ENCODE measurements at regions of chr19 and their contacts with region 1.

Region 1: GRCh38 chr19:6021878-6022569 is 44.1 kb upstream of the RANBP3 start:
- DNase-seq: peak; percentile 92
- ATAC-seq: peak; percentile 97
- H3K4me3 Mint-ChIP-seq: no peak overlapping the region
- H3K27ac Mint-ChIP-seq: no peak overlapping the region
- H3K4me1 Mint-ChIP-seq: peaks cover 2% of the 10 kb centered on the region
- H3K27me3 Mint-ChIP-seq: no peaks in the 10 kb centered on the region
- CTCF ChIP-seq: peak; percentile 74

Region 2: GRCh38 chr19:5904352-5905113 is 117.5 kb before region 1 on chr19 and contains the start of gene VMAC:
- CTCF ChIA-PET with region 1: interaction called, 12 read pairs
- POLR2A ChIA-PET with region 1: no interaction called
- intact Hi-C with region 1: no loop called
- DNase-seq: peak; percentile 100
- ATAC-seq: peak; percentile 83
- H3K4me3 Mint-ChIP-seq: peak within 1 kb of the TSS; percentile 99
- H3K27ac Mint-ChIP-seq: peak within 1 kb of the TSS; percentile 100
- H3K4me1 Mint-ChIP-seq: peaks cover 40% of the 10 kb centered on the region
- H3K27me3 Mint-ChIP-seq: no peaks in the 10 kb centered on the region
- CTCF ChIP-seq: no peak
- total RNA-seq, gene VMAC: 1.2 to 2.5 TPM

Region 3: GRCh38 chr19:5947435-5947834 is 74.6 kb before region 1 on chr19:
- CTCF ChIA-PET with region 1: interaction called, 16 read pairs
- POLR2A ChIA-PET with region 1: no interaction called
- intact Hi-C with region 1: no loop called
- DNase-seq: no peak
- ATAC-seq: no peak
- H3K4me3 Mint-ChIP-seq: no peak overlapping the region
- H3K27ac Mint-ChIP-seq: peak overlapping the region; percentile 75
- H3K4me1 Mint-ChIP-seq: peaks cover 87% of the 10 kb centered on the region
- H3K27me3 Mint-ChIP-seq: no peaks in the 10 kb centered on the region
- CTCF ChIP-seq: no peak

Region 4: DNA sequence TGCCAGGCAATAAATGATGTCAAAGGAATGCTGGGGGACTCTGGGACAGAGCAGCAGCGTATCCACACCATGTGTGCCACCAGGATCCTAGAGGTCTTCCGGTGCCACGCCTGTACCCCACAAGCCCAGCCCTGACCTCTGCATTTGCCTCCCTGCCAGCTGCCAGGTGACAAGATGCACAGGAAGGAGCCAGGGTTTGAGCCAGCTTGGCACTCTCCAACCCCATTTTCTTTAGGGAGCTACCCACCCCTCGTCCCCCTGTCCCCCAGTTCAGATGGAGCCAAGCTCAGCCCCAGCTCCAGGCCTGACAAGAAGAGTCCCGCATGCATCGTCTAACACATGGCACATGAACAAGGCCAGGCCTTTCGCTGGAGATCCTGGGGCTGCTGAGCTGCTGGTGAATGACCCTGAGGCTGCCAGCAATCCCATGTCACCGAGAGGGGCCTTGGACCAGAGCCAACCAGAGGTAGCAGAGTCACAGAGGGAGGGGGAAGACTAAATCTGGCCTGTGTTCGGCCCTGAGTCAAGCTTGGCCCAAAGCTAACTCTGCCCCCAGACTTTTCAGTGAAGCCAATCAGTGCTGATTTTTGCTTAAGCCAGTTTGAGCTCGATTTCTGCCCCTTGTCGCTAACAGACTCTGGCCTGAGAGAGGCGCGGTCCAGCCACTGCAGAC is 62.2 kb before region 1 on chr19:
- CTCF ChIA-PET with region 1: no interaction called
- POLR2A ChIA-PET with region 1: no interaction called
- intact Hi-C with region 1: no loop called
- DNase-seq: no peak
- ATAC-seq: no peak
- H3K4me3 Mint-ChIP-seq: no peak overlapping the region
- H3K27ac Mint-ChIP-seq: peak overlapping the region; percentile 82
- H3K4me1 Mint-ChIP-seq: peaks cover 90% of the 10 kb centered on the region
- H3K27me3 Mint-ChIP-seq: no peaks in the 10 kb centered on the region
- CTCF ChIP-seq: no peak

Region 5: GRCh38 chr19:5977785-5978605 is 44.0 kb before region 1 on chr19 and contains the start of gene RANBP3:
- CTCF ChIA-PET with region 1: interaction called, 91 read pairs
- POLR2A ChIA-PET with region 1: interaction called, 3 read pairs
- intact Hi-C with region 1: no loop called
- DNase-seq: peak; percentile 99
- ATAC-seq: peak; percentile 91
- H3K4me3 Mint-ChIP-seq: peak within 1 kb of the TSS; percentile 95
- H3K27ac Mint-ChIP-seq: peak within 1 kb of the TSS; percentile 92
- H3K4me1 Mint-ChIP-seq: peaks cover 53% of the 10 kb centered on the region
- H3K27me3 Mint-ChIP-seq: no peaks in the 10 kb centered on the region
- CTCF ChIP-seq: no peak
- total RNA-seq, gene RANBP3: 74.3 to 87.5 TPM

Region 6: DNA sequence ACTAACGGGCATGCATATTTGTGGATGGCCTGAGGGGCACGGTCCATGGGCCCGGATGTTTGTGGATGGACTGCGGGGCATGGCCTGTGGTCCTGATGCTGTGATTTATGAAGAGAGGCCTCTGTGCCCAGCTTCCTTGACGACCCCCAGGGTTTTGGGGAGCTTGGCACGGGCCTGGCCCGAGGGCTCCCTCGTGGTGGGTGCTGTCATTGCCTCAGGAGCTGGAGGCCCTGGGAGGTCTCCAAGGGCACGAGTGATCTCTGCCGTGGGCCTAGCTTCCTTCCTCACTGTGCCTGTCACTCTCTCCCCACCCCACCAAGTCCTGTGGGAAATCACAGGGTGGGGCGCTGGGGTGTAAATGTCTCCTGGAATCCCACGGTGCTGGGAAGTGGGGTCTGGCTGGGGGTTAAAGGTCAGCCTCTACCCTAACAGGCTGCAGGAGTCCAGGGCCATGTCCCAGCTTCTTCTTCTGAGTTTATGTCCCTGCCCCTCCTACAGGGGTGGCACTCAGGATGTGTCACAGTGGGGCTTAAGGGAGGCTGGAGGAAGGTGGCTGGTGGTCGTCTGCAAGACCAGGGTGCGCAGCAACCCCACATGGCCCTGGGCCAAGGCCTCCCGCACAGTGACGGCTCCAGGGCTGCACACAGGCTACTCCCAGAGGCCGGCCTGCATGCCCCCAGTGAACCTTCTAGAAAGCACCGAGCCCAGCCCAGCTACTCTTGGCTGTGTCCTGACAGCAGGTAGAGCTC is 16.5 kb before region 1 on chr19:
- CTCF ChIA-PET with region 1: interaction called, 15 read pairs
- POLR2A ChIA-PET with region 1: no interaction called
- intact Hi-C with region 1: no loop called
- DNase-seq: no peak
- ATAC-seq: no peak
- H3K4me3 Mint-ChIP-seq: no peak overlapping the region
- H3K27ac Mint-ChIP-seq: no peak overlapping the region
- H3K4me1 Mint-ChIP-seq: no peaks in the 10 kb centered on the region
- H3K27me3 Mint-ChIP-seq: no peaks in the 10 kb centered on the region
- CTCF ChIP-seq: no peak